Endothelial cell of umbilical vein (primary cell): ENCODE measurements at regions of chrX and their contacts with region 1.

Region 1: DNA sequence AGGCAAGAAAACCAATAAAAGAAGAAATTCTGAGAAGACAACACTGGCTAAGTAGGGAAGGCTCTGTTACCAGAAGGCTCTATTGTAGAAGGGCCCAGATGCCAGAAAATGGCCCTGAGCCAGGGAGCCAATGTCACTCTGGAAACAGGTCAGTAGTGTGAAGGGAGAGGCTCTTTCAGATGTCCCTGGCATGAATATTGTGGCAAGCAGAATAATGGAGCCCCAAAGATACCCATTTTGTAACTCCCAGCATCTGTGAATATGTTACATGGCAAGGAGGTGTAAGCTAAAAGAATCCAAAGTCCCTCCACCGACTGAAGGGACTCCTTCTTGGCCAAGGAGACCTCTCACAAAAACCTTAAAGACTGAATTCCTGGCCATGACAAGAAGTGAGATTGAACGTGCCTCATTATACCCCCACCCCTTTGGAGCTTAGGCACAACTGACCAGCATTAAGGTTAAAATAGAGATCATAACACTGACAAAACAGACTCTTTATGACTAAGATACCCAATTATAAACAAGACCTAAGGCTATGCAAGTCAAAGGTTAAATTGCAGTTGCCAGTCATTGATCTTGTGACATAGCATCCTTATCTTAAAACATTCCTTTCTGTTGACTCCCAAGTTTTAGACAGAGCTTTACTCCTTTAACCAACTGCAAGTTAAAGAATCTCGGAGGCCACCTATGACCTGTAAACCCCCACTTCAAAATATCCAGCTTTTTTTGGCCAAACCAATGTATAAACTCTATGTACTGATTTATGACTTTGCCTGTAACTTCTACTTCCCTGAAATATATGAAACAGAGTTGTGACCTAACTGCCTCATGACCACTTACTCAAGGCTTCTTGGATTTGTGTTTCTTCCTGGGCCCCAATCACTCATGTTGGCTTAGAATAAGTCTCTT is 42.2 kb upstream of the SMIM10 start:
- DNase-seq: peak; percentile 48
- H3K4me3 ChIP-seq: no peak overlapping the region
- H3K27ac ChIP-seq: peak overlapping the region; percentile 72
- H3K4me1 ChIP-seq: peaks cover 19% of the 10 kb centered on the region
- H3K27me3 ChIP-seq: no peaks in the 10 kb centered on the region
- CTCF ChIP-seq: no peak
- POLR2A ChIP-seq: no peak

Region 2: DNA sequence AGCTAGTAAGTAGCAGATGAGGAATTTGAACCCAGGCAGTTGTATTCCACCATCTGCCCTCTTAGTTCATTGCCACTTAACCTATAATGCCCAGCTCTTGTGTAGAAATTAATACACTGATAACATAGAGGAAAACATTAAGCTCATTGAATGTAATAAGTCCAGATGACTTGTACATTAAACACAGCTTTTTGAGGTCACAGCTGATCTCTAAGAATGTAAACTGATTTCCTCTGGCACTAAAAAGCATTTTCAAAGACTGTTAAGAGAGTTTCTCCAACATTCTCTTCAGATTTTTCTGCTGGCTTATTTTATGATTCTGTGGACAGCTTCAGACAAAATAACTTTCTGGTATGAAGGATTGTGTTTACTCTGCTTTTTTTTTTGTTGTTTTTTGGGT is 445.9 kb before region 1 on chrX:
- CTCF ChIA-PET with region 1: no interaction called
- POLR2A ChIA-PET with region 1: no interaction called
- dilution Hi-C with region 1: no loop called
- intact Hi-C with region 1: no loop called
- DNase-seq: no peak
- H3K4me3 ChIP-seq: no peak overlapping the region
- H3K27ac ChIP-seq: no peak overlapping the region
- H3K4me1 ChIP-seq: no peaks in the 10 kb centered on the region
- H3K27me3 ChIP-seq: no peaks in the 10 kb centered on the region
- CTCF ChIP-seq: no peak
- POLR2A ChIP-seq: no peak

Region 3: DNA sequence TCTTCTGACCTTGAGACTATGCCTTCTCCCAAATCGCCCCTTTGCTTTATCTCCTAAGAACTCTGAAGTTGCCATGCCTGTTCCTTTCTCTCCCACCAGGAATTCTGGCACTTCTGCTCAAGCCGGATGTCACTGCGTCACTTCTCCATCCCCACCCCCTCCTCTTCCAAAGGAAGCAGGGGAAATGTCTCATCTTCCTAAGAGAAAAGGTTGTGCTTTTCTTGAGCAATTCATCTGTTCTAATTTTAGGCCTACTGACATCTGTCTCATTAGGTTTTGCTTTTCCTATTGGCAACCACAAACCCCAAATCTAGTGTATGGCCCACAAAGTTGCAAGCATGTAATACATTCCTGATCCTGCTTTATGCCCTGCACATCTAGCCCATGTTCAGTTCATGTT is 127.2 kb before region 1 on chrX:
- CTCF ChIA-PET with region 1: no interaction called
- POLR2A ChIA-PET with region 1: no interaction called
- dilution Hi-C with region 1: no loop called
- intact Hi-C with region 1: loop called (anchors 1 kb)
- DNase-seq: peak; percentile 90
- H3K4me3 ChIP-seq: peak overlapping the region in 1 of 3 experiments; percentile 39
- H3K27ac ChIP-seq: peak overlapping the region; percentile 76
- H3K4me1 ChIP-seq: peaks cover 19% of the 10 kb centered on the region
- H3K27me3 ChIP-seq: no peaks in the 10 kb centered on the region
- CTCF ChIP-seq: no peak
- POLR2A ChIP-seq: no peak

Region 4: DNA sequence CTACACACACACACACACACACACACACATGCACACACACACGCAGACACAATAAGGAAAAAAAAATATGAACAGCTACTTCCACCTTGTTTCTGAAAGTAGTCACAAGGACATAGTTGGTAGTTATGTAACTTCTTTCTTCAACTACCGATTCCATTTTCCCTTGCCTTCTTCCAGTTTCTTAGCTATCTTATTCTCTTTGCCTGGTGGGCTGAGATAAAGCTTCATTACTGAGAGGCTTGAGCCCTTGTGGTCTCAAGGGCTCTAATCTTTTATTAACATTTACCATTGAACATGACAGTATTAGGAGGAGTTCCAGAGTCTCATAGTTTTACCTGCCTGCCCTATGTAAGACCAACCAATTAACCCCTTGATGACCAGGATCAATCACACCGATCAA is 33.3 kb after region 1 on chrX:
- CTCF ChIA-PET with region 1: no interaction called
- POLR2A ChIA-PET with region 1: no interaction called
- dilution Hi-C with region 1: no loop called
- intact Hi-C with region 1: no loop called
- DNase-seq: no peak
- H3K4me3 ChIP-seq: no peak overlapping the region
- H3K27ac ChIP-seq: no peak overlapping the region
- H3K4me1 ChIP-seq: no peaks in the 10 kb centered on the region
- H3K27me3 ChIP-seq: peaks cover 0 to 3% of the 10 kb centered on the region in 2 experiments
- CTCF ChIP-seq: no peak
- POLR2A ChIP-seq: no peak